Activated CD4-positive, alpha-beta T cell treated with anti-CD3 and anti-CD28 coated beads, Interleukin-2, amount 10 ng/mL, durations not matched to agents 24 days and 14 days (primary cell): ENCODE measurements at regions of chr11 and their contacts with region 1.

Region 1: GRCh38 chr11:93529707-93530467 is 13.3 kb downstream of the SMCO4 start:
- DNase-seq: peak; percentile 74
- H3K4me3 Mint-ChIP-seq: peak overlapping the region; percentile 56
- H3K27ac Mint-ChIP-seq: peak overlapping the region; percentile 82
- H3K4me1 Mint-ChIP-seq: peaks cover 71% of the 10 kb centered on the region
- H3K27me3 Mint-ChIP-seq: no peaks in the 10 kb centered on the region

Region 2: DNA sequence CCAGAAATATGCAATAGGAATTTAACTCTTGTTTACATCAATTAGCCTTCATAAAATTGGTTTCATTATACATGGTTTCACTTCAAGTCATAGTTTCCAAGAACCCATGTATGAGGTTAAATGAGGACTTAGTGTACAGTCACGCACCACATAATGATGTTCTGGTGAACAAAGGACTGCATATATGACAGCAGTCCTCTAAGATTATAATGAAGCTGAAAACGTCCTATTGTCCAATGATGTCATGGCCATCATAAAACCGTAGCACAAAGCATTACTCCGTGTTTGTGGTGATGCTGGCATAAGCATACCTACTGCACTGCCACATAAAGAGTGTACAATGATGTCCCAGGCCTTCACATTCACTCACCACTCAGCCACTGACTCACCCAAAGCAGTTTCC is 17.8 kb before region 1 on chr11:
- intact Hi-C with region 1: loop called (anchors 2 kb)
- DNase-seq: peak; percentile 73
- H3K4me3 Mint-ChIP-seq: peak overlapping the region; percentile 63
- H3K27ac Mint-ChIP-seq: peak overlapping the region; percentile 89
- H3K4me1 Mint-ChIP-seq: peaks cover 33% of the 10 kb centered on the region
- H3K27me3 Mint-ChIP-seq: no peaks in the 10 kb centered on the region